GM10248 (cell line): ENCODE measurements at regions of chr2 and their contacts with region 1.

Region 1: GRCh38 chr2:181715033-181715630 is 34.8 kb upstream of the NEUROD1 start:
- DNase-seq: peak; percentile 57
- CTCF ChIP-seq: peak; percentile 79

Region 2: DNA sequence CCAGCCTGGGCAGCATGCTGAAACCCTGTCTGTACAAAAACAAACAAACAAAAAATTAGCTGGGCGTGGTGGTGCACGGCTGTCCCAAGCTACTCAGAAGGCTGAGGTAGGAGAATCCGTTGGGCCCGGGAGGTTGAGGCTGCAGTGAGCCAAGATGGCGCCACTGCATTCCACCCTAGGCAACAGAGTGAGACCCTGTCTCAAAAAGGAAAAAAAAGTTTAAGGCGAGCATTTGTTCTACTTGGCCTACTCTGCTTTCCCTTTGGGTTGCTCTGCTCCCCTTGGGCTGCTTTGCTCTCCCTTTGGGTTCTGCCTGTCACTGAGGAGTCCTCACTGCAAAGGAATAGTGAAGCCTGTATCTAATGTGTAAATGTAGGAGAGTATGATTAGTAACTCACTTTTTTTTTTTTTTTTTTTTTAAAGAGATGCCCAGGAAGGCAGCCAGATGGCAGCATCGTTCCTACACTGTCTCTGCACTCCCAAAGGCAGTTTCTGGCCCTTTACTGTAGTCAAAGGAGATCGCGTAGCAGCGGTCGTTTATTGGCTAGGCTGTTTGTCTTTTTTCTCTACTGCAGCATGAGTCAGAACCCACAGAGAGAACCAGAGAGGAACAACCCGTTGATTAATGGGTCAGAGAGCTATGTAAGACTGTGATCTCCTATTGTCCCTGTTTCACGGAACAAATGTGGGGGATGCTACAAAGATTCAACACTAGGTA is 1589.7 kb before region 1 on chr2:
- CTCF ChIA-PET with region 1: interaction called, 42 read pairs
- POLR2A ChIA-PET with region 1: no interaction called
- DNase-seq: peak; percentile 28
- CTCF ChIP-seq: peak; percentile 53

Region 3: GRCh38 chr2:181085734-181086133 is 629.4 kb before region 1 on chr2:
- CTCF ChIA-PET with region 1: interaction called, 26 read pairs
- POLR2A ChIA-PET with region 1: no interaction called
- DNase-seq: no peak
- CTCF ChIP-seq: no peak

Region 4: DNA sequence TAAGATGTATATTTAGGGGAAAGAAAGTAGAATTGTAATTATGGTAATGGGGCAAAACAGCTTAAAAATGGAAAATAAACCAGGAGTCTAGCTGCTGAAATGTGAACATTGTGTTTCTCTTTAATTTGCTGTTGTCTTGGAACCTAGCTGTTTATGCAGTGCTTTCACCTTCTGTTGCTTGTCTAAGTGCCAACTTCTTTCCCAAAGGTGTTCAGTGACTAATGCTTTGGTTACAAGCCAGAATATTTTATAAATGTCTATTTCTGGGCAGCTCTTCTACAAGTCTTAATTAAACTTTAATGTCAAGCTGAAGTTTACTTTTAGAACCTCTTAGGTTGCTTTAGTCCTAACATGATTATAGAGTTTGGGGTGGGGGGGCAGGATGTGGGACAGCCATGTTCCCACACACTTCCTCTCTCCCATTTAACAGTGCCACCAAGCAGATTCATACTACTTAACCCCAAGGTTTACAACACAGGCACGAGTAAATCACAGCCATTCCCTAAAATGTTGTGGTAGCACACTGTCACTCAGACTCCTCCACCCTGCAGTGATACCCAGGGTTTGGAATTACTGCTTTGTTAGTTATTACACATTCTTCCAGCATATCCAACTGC is 197.3 kb before region 1 on chr2:
- CTCF ChIA-PET with region 1: interaction called, 11 read pairs
- POLR2A ChIA-PET with region 1: no interaction called
- DNase-seq: no peak
- CTCF ChIP-seq: no peak

Region 5: DNA sequence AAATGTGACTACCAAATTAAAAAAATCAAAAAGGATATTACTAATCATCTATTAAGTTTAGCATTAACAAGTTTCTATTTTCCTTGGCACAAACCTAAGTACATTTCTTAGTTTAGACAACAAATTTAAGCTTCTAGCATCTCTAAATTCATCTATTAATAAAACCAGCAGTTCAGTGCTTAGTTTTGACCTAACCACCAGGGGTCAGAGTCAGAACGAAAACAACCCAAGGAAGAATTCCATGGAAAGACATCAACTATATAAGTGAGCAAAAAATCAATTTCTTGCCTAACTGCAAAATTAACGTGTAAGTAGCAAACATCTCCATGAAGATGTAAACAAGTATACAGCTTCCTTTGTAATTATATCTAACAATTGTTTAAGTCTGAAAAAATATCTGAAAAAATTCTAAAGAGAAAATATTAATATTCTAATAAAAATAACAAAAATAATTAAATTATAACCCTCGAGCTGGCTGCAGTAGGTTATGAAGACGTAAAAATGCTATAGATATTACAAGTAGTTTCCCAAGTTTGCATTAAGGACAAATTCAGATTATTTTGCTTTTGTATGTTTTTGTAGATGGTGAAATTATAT is 141.9 kb before region 1 on chr2:
- CTCF ChIA-PET with region 1: interaction called, 83 read pairs
- POLR2A ChIA-PET with region 1: no interaction called
- DNase-seq: no peak
- CTCF ChIP-seq: peak; percentile 42

Region 6: DNA sequence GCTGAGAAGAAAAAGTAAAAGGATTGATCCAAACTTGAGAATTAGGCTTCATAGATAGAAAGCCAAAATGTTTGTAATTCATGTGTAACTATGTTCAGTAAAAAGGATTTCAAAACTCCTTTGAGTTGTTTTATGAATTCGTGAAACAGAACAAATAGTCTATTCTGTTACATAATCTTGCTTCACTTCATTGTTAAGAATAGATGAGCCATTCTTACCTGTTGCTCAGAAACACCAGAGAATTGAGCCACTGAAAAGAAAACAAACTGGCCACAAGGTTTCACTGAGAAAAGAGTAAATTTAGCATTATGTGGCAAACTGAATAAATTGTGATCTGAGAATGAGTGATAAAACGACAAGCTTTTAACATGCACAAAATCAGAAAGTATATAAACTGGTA is 171.9 kb after region 1 on chr2:
- CTCF ChIA-PET with region 1: no interaction called
- POLR2A ChIA-PET with region 1: no interaction called
- DNase-seq: no peak
- CTCF ChIP-seq: no peak

Region 7: GRCh38 chr2:181992776-181993175 is 277.6 kb after region 1 on chr2:
- CTCF ChIA-PET with region 1: no interaction called
- POLR2A ChIA-PET with region 1: no interaction called
- DNase-seq: peak; percentile 55
- CTCF ChIP-seq: no peak